ENCODE measurements at regions of chr7 and their contacts with region 1.

Region 1: GRCh38 chr7:43582503-43583423 is at the start of gene STK17A:
- DNase-seq: peak; percentile 92
- H3K4me3 ChIP-seq: peak within 1 kb of the TSS; percentile 93
- H3K27ac ChIP-seq: peak within 1 kb of the TSS; percentile 98
- H3K4me1 ChIP-seq: peaks cover 26% of the 10 kb centered on the region
- H3K27me3 ChIP-seq: peaks cover 8% of the 10 kb centered on the region
- CTCF ChIP-seq: peak; percentile 98
- total RNA-seq, gene STK17A: 32.3 TPM

Region 2: DNA sequence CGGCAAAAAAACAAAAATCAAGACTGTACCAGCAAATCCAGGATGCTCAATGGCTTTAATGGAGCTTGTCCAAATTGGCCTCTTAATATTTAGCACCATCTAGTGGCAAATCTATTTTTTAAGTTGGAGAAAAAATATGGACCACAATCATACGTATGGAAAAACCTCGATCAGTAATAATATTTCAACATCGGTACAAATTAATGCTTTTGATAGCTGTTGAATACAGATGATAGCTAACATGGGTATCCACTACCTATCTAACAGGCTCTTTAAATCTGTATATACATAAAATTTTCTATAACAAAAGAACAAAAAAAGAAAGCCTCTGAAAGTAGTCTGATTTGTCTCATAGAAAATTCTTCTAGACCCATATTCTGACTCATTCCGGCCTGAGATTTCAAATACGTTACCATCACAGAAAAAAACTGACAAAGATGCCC is 117.3 kb after region 1 on chr7:
- intact Hi-C with region 1: loop called (anchors 2 kb)
- DNase-seq: no peak
- H3K4me3 ChIP-seq: no peak overlapping the region
- H3K27ac ChIP-seq: no peak overlapping the region
- H3K4me1 ChIP-seq: peaks cover 25% of the 10 kb centered on the region
- H3K27me3 ChIP-seq: no peaks in the 10 kb centered on the region
- CTCF ChIP-seq: peak; percentile 75

Region 3: DNA sequence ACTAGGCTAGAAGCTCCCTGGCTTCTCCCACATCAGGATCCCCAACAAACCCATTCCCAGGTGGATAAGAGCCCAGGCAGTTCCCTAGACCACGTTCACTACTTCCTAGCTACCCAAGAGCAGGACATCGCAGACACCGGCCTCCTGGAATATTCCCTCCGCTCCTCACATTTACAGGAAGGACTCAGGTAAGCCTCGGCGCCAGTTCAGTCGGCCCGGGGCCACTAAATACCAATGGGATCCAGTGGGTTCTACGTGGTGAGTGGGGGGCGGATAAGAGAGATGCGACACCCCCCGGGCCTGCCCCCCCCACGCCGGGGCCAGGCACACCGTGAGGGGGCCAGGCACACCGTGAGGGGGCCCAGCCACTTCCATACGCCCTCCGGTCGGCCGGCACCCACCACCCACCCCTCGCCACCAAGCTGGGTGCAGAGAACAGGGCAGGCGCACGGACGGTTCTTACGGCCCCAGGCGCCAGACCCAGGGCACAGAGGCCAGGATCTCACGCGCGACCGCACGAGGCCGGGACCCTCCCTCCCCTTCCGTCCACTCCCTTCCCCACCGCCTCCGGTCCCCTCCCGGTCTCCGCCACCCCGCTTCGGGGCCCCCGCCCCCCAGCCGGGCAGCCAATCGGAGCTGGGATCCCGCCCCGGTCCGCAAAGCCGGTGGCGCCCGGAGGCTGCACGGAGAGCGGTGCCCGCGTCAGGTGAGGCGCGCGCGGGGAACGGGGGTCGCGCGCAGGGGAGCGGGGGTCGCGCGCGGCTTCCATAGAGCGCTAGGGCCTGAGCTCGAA is 175.5 kb after region 1 on chr7 and contains the start of gene BLVRA:
- intact Hi-C with region 1: no loop called
- DNase-seq: peak; percentile 76
- H3K4me3 ChIP-seq: peak within 1 kb of the TSS; percentile 78
- H3K27ac ChIP-seq: peak within 1 kb of the TSS; percentile 67
- H3K4me1 ChIP-seq: peaks cover 26% of the 10 kb centered on the region
- H3K27me3 ChIP-seq: no peaks in the 10 kb centered on the region
- CTCF ChIP-seq: no peak
- total RNA-seq, gene BLVRA: 44.8 TPM